Mucosa of descending colon (tissue), 3 donors: ENCODE measurements at regions of chr1 and their contacts with region 1.

Region 1: GRCh38 chr1:20493839-20494608 is 8.0 kb upstream of the CAMK2N1 start:
- DNase-seq: peak; percentile 84 to 96 (median 94)
- ATAC-seq: peak; percentile 95
- H3K4me3 ChIP-seq: no peak overlapping the region
- H3K4me1 ChIP-seq: peaks cover 7% of the 10 kb centered on the region
- CTCF ChIP-seq: peak; percentile 81

Region 2: GRCh38 chr1:20212685-20213331 is 281.2 kb before region 1 on chr1:
- intact Hi-C with region 1: loop called (anchors 2 to 5 kb)
- DNase-seq: peak; percentile 76 to 83 (median 80)
- ATAC-seq: peak; percentile 79
- H3K4me3 ChIP-seq: no peak overlapping the region
- H3K4me1 ChIP-seq: peaks cover 16% of the 10 kb centered on the region
- CTCF ChIP-seq: peak; percentile 66

Region 3: DNA sequence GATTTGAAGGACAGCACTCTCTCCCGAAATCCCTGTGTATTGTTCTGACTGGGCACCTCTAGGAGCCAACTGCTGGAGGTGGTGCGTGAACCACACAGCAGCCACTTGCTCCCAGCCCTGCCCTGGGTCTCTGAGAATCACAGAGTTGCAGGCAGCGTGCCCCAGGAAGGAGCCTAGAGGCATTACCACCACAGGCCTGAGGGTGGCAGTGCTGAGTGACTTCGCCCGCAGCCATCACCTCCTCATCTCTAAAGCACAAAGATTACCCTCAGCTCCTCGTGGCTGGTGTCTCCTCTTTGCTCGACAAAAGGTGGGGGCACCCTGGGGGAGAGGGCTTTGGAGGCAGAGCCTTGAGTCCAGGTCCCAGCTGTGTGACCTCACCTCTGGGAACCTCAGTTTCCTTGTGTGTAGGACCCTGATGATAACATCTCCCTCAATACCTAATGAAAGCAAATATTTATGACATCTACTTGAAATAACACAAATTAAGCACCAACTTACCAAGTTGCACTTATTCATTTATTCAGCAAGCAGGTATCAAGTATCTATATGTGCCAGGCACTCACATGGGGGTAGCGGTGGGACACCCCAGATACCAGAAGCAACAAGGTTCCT is 117.0 kb before region 1 on chr1:
- intact Hi-C with region 1: loop called in 1 of 2 experiments (anchors 10 kb)
- DNase-seq: peak in 2 of 3 donors; percentile 67 to 77
- ATAC-seq: peak; percentile 90
- H3K4me3 ChIP-seq: no peak overlapping the region
- H3K4me1 ChIP-seq: no peaks in the 10 kb centered on the region
- CTCF ChIP-seq: peak; percentile 79